Breast epithelium (tissue), 4 donors: ENCODE measurements at regions of chr5 and their contacts with region 1.

Region 1: DNA sequence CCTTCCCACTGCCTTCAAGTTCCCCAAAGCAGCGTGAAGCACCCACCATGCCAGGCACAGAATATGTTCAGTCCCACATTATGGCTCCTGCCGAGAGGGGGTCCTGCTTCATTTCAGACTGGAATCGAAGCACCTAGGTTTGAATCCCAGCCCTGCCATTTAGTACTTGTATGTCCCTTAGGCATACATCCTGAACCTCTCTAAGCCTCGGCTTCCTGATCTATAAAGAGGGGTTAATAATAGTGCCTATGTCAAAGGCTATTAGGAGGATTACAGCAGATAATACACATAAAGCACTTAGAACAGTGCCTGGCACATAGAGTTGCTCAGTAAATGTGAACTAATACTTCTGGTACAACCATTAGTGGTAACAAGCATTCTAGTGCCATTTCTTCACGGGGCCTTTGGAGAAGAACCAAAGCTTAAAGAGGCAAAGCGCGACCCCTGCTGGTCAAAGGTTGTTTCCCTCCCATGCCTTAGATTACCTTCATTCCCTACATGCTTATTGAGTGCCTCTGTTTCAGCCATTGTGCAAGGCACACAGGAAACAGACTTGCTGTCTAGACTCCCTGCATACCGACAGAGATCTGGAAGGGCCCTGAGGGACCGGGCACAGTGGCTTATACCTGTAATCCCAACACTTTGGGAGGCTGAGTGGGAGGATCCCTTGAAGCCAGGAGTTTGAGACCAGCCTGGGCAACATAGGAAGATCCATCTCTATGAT is 98.2 kb downstream of the PPARGC1B start:
- DNase-seq: peak; percentile 85 to 89
- H3K4me3 ChIP-seq: no peak overlapping the region
- H3K27ac ChIP-seq: no peak overlapping the region
- H3K4me1 ChIP-seq: no peaks in the 10 kb centered on the region
- H3K27me3 ChIP-seq: no peaks in the 10 kb centered on the region
- CTCF ChIP-seq: peak; percentile 75 to 93 (median 85)
- POLR2A ChIP-seq: no peak

Region 2: GRCh38 chr5:149636851-149637246 is 191.5 kb before region 1 on chr5:
- intact Hi-C with region 1: loop called (anchors 10 kb)
- DNase-seq: no peak
- H3K4me3 ChIP-seq: no peak overlapping the region
- H3K27ac ChIP-seq: no peak overlapping the region
- H3K4me1 ChIP-seq: no peaks in the 10 kb centered on the region
- H3K27me3 ChIP-seq: no peaks in the 10 kb centered on the region
- CTCF ChIP-seq: peak; percentile 74 to 90 (median 83)
- POLR2A ChIP-seq: no peak

Region 3: DNA sequence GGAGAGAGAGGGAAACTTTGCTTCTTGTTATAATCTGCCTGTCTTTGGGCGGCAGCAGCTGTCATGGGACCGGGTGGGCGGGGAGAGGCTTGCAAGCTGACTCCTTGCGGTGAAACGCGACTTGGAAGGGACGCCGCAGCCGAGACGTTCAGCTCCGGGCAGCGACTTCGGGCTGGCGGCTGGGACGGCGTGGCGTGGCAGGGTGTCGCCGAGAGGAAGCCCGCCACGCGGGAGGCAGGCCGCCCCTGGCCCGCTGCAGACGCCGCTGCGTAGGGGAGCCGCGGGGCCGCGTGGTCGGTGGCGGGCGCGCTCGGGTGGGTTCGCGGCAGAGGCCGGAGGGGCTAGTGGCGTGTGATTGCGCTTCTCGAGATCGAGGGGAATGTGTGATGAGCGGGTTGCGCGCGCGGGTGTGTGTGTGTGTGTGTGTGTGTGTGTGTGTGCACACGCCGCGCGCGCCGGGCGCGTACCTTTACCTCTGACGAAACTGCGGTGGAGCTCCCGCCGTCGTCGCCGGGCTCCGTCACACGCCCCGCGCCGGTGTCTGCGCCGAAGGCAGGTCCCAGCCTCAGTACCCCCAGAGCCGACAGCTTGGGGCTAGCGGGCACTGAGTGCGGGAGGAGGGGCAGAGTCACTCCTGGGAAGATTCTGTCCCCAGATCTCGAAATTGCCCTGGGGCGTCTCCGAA is 96.5 kb before region 1 on chr5:
- intact Hi-C with region 1: loop called (anchors 10 kb)
- DNase-seq: peak in 1 of 2 donors; percentile 81
- H3K4me3 ChIP-seq: peak overlapping the region; percentile 83 to 97 (median 84)
- H3K27ac ChIP-seq: peak overlapping the region; percentile 77 to 90
- H3K4me1 ChIP-seq: no peaks in the 10 kb centered on the region
- H3K27me3 ChIP-seq: no peaks in the 10 kb centered on the region
- CTCF ChIP-seq: no peak
- POLR2A ChIP-seq: no peak

Region 4: DNA sequence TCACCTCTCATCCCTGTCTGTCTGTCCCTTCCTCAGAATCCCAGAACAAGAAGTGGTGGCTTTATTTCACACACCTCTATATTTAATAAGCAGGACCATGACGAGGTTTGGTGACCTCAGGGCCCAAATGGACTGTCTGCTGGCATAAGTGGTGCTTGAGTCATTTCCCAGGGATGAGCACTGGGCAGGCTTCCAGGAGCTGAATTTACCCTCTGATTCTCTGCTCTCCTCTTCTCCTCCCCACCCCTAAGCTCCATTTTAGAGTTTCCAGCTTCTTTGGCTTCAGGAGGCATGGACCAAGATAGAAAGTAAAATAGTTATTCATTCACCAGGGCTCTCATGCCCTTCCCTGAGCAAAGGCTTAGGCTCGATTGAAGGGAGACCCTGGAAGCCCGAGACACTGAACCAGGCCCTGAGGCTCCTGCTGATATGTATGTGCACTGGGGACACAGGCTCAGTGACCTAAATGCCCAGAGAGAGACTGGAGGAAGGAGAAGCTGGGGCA is 29.2 kb before region 1 on chr5:
- intact Hi-C with region 1: no loop called
- DNase-seq: peak; percentile 68 to 71
- H3K4me3 ChIP-seq: no peak overlapping the region
- H3K27ac ChIP-seq: peak overlapping the region; percentile 33 to 57
- H3K4me1 ChIP-seq: no peaks in the 10 kb centered on the region
- H3K27me3 ChIP-seq: no peaks in the 10 kb centered on the region
- CTCF ChIP-seq: no peak
- POLR2A ChIP-seq: no peak

Region 5: GRCh38 chr5:149860801-149861322 is 32.5 kb after region 1 on chr5:
- intact Hi-C with region 1: loop called (anchors 1 kb)
- DNase-seq: no peak
- H3K4me3 ChIP-seq: no peak overlapping the region
- H3K27ac ChIP-seq: no peak overlapping the region
- H3K4me1 ChIP-seq: peaks cover 0 to 11% of the 10 kb centered on the region in 2 donors
- H3K27me3 ChIP-seq: no peaks in the 10 kb centered on the region
- CTCF ChIP-seq: no peak
- POLR2A ChIP-seq: no peak

Region 6: DNA sequence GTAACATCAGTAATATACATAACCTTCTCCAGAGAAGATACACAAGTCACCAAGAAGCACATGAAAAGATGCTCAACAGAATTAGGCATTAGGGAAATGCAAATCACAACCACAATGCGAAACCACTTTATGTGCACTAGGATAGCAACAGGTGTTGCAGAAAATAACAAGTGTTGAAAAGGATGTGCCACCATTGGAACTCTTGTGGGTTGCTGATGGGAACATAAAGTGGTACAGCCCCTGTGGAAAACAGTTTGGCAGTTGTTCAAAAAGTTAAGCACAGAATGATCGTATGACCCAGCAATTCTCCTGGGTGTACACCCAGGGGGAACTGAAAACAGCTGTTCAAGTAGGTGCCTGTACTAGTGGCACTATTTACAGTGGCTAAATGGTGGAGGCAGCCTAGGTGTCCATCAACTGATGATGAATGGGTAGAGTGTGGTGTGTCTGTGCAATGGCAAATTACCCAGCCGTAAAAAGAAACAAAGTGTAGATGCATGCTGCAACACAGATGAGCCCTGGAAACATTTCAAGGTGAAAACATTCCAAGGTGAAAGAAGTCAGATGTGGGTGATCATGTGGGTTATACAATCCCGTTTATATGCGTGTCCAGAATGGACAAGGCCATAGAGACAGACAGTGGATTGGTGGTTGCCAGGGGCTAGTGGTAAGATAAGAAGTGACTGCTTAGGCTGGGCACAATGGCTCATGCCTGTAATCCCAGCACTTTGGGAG is 1368.4 kb after region 1 on chr5:
- intact Hi-C with region 1: loop called (anchors 5 kb)
- DNase-seq: no peak
- H3K4me3 ChIP-seq: no peak overlapping the region
- H3K27ac ChIP-seq: peak overlapping the region in 1 of 2 donors; percentile 64
- H3K4me1 ChIP-seq: no peaks in the 10 kb centered on the region
- H3K27me3 ChIP-seq: no peaks in the 10 kb centered on the region
- CTCF ChIP-seq: no peak
- POLR2A ChIP-seq: no peak